Activated B cell treated with CpG ODN at 0.5 μM for 24 hours (primary cell): ENCODE measurements at regions of chr12 and their contacts with region 1.

Region 1: DNA sequence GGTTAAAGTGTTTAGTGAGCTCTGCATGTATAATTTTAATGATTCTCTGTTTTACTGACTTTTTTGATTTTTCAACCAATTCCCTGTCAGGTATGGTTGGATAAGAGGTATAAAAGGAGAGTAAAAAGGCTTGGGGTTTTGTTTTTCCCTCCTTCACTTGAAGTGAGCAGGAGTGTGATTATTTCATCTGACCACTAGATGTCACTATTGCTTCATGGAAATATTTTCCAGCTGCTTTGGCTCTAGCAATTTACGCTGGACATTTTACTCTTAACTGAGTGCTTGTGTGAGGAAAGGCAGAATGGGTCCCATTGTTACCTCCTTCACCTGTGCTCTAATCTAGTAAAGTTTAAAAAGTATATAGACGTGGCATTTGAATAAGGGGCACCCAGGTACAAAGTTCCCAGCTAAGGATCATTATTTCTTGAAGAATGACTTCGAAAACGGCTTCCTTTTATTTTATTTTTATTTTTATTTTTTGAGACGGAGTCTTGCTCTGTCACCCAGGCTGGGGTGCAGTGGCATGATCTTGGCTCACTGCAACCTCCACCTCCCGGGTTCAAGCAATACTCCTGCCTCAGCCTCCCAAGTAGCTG is 66.5 kb downstream of the TBC1D30 start:
- DNase-seq: no peak
- ATAC-seq: no peak
- H3K4me3 Mint-ChIP-seq: no peak overlapping the region
- H3K27ac Mint-ChIP-seq: no peak overlapping the region
- H3K4me1 Mint-ChIP-seq: no peaks in the 10 kb centered on the region
- H3K27me3 Mint-ChIP-seq: peaks cover 34% of the 10 kb centered on the region
- CTCF ChIP-seq: peak; percentile 95

Region 2: GRCh38 chr12:65232476-65233077 is 341.6 kb after region 1 on chr12:
- CTCF ChIA-PET with region 1: interaction called, 61 read pairs
- POLR2A ChIA-PET with region 1: no interaction called
- intact Hi-C with region 1: loop called (anchors 1 kb)
- DNase-seq: no peak
- ATAC-seq: peak; percentile 37
- H3K4me3 Mint-ChIP-seq: no peak overlapping the region
- H3K27ac Mint-ChIP-seq: peak overlapping the region; percentile 64
- H3K4me1 Mint-ChIP-seq: peaks cover 9% of the 10 kb centered on the region
- H3K27me3 Mint-ChIP-seq: no peaks in the 10 kb centered on the region
- CTCF ChIP-seq: no peak

Region 3: GRCh38 chr12:65986047-65986446 is 1095.1 kb after region 1 on chr12:
- CTCF ChIA-PET with region 1: interaction called, 4 read pairs
- POLR2A ChIA-PET with region 1: no interaction called
- intact Hi-C with region 1: loop called (anchors 1 kb)
- DNase-seq: no peak
- ATAC-seq: no peak
- H3K4me3 Mint-ChIP-seq: no peak overlapping the region
- H3K27ac Mint-ChIP-seq: no peak overlapping the region
- H3K4me1 Mint-ChIP-seq: no peaks in the 10 kb centered on the region
- H3K27me3 Mint-ChIP-seq: no peaks in the 10 kb centered on the region
- CTCF ChIP-seq: no peak

Region 4: GRCh38 chr12:66087365-66087943 is 1196.5 kb after region 1 on chr12:
- CTCF ChIA-PET with region 1: interaction called, 10 read pairs
- POLR2A ChIA-PET with region 1: no interaction called
- intact Hi-C with region 1: loop called (anchors 1 kb)
- DNase-seq: no peak
- ATAC-seq: peak; percentile 49
- H3K4me3 Mint-ChIP-seq: no peak overlapping the region
- H3K27ac Mint-ChIP-seq: no peak overlapping the region
- H3K4me1 Mint-ChIP-seq: peaks cover under 1% of the 10 kb centered on the region
- H3K27me3 Mint-ChIP-seq: peaks cover 15% of the 10 kb centered on the region
- CTCF ChIP-seq: no peak

Region 5: DNA sequence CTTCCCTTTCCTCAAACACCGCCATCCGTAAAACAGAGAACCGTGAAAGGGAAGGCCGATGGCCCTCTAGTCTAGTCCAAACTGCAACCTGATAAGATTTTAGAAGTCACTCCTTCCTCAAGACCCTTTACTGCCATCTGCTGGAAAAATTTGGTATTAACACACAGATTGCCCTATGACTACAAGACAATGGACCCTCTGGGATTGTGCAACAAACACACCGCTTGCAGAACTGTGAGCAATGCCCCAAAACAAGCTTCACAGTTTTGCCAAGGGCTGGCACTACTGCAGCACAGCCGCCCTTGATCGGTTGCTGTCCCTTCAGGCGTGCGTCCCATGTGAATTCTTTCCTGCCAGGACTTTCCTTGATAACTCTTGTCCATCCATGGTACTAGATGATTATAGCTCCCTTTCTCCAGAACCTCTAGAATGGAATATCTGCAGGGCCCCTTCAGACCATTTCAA is 1216.5 kb after region 1 on chr12:
- CTCF ChIA-PET with region 1: interaction called, 13 read pairs
- POLR2A ChIA-PET with region 1: no interaction called
- intact Hi-C with region 1: loop called (anchors 1 kb)
- DNase-seq: no peak
- ATAC-seq: peak; percentile 85
- H3K4me3 Mint-ChIP-seq: no peak overlapping the region
- H3K27ac Mint-ChIP-seq: no peak overlapping the region
- H3K4me1 Mint-ChIP-seq: peaks cover 3% of the 10 kb centered on the region
- H3K27me3 Mint-ChIP-seq: peaks cover 12% of the 10 kb centered on the region
- CTCF ChIP-seq: peak; percentile 71

Region 6: DNA sequence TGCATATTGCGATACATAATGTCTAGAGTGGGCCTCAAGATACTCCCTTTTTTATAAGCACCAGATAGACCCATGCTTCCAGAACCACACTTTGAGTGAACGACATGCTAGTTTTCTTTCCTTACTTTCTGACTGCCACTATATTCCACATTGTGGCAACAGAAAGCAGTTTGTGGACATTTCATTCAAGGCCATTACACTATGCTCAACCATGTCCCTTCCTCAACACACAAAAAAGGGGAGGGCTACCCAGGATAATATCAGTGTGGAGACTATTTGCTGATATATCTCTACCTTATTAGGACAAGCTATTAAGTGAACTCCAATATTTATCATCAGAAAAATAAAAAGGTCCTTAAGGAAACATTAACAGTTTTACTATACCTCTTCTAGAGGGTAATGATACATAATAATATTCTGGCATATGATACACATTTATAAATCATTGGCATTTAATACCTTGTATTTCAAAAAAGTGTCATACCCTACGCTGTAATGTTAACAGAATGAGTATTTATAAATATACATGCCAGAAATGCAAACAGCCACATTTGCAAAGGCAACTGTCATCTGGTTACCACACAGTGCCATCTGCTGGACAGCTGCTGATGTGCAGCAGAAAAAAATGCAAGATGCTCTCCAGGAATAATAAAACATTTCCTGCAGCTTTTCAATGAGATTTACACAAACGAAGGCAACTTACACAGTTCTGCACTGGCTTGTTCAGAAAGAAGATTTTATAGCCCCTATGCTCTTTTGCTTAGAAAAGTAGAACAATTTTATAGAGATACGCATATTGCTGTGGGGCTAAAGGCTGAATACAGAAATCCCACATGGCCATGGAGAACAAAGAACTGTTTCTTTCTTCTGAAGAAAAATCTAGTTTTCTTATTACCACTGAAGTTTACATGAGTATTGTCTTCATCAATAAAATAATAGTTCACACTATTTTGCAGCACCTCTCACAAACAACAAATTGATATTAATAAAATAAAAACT is 1970.1 kb after region 1 on chr12:
- CTCF ChIA-PET with region 1: interaction called, 3 read pairs
- POLR2A ChIA-PET with region 1: no interaction called
- intact Hi-C with region 1: loop called (anchors 1 kb)
- DNase-seq: peak; percentile 32
- ATAC-seq: peak; percentile 50
- H3K4me3 Mint-ChIP-seq: no peak overlapping the region
- H3K27ac Mint-ChIP-seq: no peak overlapping the region
- H3K4me1 Mint-ChIP-seq: no peaks in the 10 kb centered on the region
- H3K27me3 Mint-ChIP-seq: peaks cover 11% of the 10 kb centered on the region
- CTCF ChIP-seq: peak; percentile 99